MCF 10A (cell line): ENCODE measurements at regions of chr5 and their contacts with region 1.

Region 1: DNA sequence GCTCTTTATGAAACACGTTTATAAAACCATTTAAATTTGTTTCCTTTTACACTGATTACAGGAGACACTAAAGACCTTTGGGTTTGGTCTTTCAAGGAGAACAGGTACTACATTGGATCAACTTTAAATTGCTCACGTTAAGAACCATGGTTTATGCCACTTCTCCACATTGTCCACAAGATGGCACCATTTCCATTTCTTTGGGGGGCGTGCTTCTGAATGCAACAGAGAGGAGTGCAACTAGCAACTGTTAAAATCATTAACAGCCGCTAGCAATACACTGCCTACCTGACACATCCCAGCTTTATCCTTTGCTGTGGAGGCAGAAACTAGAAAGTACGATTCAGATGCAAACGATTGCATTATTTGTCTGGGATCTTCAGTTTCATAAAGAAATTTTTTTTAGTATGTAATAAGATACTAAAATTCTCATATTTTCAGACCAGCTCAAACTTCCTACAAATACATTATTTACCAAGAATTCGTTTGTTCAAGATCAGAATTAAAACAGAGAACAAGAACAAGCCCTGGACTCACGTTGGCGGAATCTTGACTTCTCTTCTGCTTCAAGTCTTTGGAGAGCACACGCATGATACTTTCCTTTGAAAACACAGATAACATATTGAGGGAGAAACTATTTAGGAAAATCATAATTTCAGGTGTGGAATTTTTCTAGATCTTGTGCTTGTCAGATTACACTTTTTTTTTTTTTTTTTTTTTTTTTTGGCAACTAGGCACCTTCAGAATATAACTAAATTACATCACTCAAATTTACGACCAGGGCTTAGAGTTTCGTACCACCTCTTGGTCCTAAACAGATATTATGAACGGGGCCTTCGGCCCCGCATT is 702 bp downstream of the CDC20B start:
- DNase-seq: peak; percentile 96
- H3K4me3 Mint-ChIP-seq: peak overlapping the region; percentile 83
- H3K27ac Mint-ChIP-seq: peak overlapping the region; percentile 25
- H3K4me1 Mint-ChIP-seq: peaks cover 16% of the 10 kb centered on the region
- H3K27me3 Mint-ChIP-seq: no peaks in the 10 kb centered on the region
- CTCF ChIP-seq: peak; percentile 69

Region 2: DNA sequence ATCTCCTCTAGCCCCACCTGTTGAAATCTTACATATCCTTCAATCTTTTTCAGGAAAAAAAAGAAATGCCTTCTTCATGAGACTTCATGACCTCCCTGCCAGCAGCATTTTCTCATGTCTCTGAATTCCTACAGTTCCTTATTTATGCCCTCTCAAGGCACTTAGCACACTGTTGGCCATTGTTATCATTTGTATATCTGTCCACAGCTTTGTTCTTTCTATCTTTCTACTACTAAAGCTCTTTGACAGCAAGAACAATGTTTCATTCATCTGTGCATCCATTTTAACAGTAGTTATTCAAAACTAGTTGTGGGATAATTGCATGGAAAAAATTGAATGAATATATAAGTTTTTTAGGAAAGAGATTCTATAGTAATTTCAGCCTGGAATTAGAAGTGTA is 90.7 kb before region 1 on chr5:
- CTCF ChIA-PET with region 1: no interaction called
- POLR2A ChIA-PET with region 1: no interaction called
- intact Hi-C with region 1: no loop called
- DNase-seq: no peak
- H3K4me3 Mint-ChIP-seq: no peak overlapping the region
- H3K27ac Mint-ChIP-seq: no peak overlapping the region
- H3K4me1 Mint-ChIP-seq: no peaks in the 10 kb centered on the region
- H3K27me3 Mint-ChIP-seq: peaks cover 34% of the 10 kb centered on the region
- CTCF ChIP-seq: no peak

Region 3: DNA sequence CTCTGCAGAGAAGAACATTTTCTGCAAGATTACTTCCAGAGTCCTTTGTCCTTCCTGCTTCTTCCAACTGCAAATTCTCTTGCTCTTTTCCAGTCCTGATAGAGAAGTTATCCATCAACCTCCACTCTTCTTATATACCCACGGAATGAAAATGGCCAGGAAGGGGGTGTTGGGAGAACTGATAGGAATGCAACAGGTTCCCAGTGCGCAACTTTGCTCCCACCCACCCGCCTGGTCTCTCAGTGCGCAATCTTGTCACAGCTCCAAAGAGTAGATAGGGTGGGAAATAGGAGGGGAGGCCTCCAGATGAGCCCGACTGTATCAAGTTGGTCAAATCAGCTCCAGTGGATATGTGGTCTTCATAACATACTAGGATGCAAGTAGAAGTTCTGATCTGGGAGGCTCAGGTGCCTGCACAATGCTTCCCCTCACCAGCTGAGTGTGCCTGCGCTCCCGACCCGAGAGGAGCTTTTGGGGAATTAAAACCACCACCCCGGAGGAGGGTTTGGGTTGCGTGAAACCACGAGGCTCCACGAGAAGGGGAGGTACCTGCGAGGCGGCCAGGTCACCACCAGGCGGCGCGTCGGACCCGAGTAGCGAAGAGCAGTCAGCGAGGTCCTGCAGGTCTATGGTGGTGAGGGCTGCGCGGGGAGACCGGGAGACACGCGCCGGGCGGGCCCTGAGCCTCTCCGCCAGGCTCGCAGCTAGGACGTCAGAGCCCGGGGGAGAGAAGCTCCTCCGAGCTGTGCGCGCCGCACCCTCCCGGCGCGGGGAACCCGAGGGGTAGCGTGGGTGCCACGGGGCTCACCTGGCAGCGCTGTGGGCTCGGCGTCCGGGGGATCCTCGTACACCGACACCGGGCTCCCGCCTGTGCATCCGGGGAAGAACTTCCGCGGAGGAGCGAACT is 54.0 kb after region 1 on chr5:
- CTCF ChIA-PET with region 1: interaction called, 14 read pairs
- POLR2A ChIA-PET with region 1: interaction called, 53 read pairs
- intact Hi-C with region 1: no loop called
- DNase-seq: peak; percentile 84
- H3K4me3 Mint-ChIP-seq: peak overlapping the region; percentile 74
- H3K27ac Mint-ChIP-seq: no peak overlapping the region
- H3K4me1 Mint-ChIP-seq: no peaks in the 10 kb centered on the region
- H3K27me3 Mint-ChIP-seq: no peaks in the 10 kb centered on the region
- CTCF ChIP-seq: peak; percentile 88

Region 4: GRCh38 chr5:55232985-55233928 is 61.0 kb after region 1 on chr5 and contains the start of gene CCNO:
- CTCF ChIA-PET with region 1: interaction called, 14 read pairs
- POLR2A ChIA-PET with region 1: interaction called, 53 read pairs
- intact Hi-C with region 1: loop called (anchors 2 kb)
- DNase-seq: peak; percentile 89
- H3K4me3 Mint-ChIP-seq: peak within 1 kb of the TSS; percentile 98
- H3K27ac Mint-ChIP-seq: peak within 1 kb of the TSS; percentile 90
- H3K4me1 Mint-ChIP-seq: no peaks in the 10 kb centered on the region
- H3K27me3 Mint-ChIP-seq: no peaks in the 10 kb centered on the region
- CTCF ChIP-seq: peak; percentile 20
- total RNA-seq, gene CCNO: 10.6 and 11.7 TPM in 2 replicates

Region 5: GRCh38 chr5:55307383-55308253 is 135.3 kb after region 1 on chr5 and contains the starts of genes DHX29 and MTREX:
- CTCF ChIA-PET with region 1: interaction called, 7 read pairs
- POLR2A ChIA-PET with region 1: interaction called, 13 read pairs
- intact Hi-C with region 1: loop called (anchors 10 kb)
- DNase-seq: peak; percentile 93
- H3K4me3 Mint-ChIP-seq: no peak within 1 kb of the TSS
- H3K27ac Mint-ChIP-seq: no peak within 1 kb of the TSS
- H3K4me1 Mint-ChIP-seq: peaks cover 23% of the 10 kb centered on the region
- H3K27me3 Mint-ChIP-seq: no peaks in the 10 kb centered on the region
- CTCF ChIP-seq: no peak
- total RNA-seq, gene DHX29: 18.1 and 21.8 TPM in 2 replicates
- total RNA-seq, gene MTREX: 113 and 118 TPM in 2 replicates

Region 6: GRCh38 chr5:55324815-55325418 is 152.6 kb after region 1 on chr5:
- CTCF ChIA-PET with region 1: interaction called, 3 read pairs
- POLR2A ChIA-PET with region 1: interaction called, 4 read pairs
- intact Hi-C with region 1: loop called (anchors 5 kb)
- DNase-seq: peak; percentile 53
- H3K4me3 Mint-ChIP-seq: no peak overlapping the region
- H3K27ac Mint-ChIP-seq: no peak overlapping the region
- H3K4me1 Mint-ChIP-seq: no peaks in the 10 kb centered on the region
- H3K27me3 Mint-ChIP-seq: no peaks in the 10 kb centered on the region
- CTCF ChIP-seq: peak; percentile 67

Region 7: DNA sequence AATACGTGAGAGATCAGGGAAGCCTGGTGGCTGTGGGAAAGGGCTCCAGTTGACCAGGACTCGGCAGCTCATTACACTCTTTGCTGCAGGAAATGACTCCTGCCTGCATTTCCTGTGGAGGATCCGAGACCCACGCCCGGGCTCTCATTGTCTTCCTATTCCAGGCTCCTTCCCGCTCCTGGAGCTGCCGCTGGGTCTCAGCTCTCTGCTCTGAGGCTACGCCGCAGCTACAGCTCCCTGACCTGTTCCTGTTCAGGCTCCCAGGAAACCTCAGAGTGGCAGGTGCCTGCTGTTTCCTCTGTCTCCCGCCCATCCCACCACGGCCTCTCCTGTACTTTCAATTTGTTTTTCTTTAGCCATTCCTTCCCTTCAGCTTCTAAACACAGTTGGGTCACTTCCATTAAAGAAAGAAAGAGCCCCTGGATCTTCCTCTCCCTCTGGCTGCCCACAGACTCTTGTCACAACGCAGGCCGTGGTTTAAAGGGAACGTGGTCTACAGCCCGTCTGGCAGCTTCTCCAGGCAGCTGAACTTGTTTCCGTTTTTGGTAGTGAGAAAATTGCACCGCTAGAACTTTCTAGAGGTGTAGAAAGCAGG is 751.0 kb after region 1 on chr5:
- CTCF ChIA-PET with region 1: no interaction called
- POLR2A ChIA-PET with region 1: no interaction called
- intact Hi-C with region 1: loop called (anchors 2 kb)
- DNase-seq: no peak
- H3K4me3 Mint-ChIP-seq: no peak overlapping the region
- H3K27ac Mint-ChIP-seq: no peak overlapping the region
- H3K4me1 Mint-ChIP-seq: no peaks in the 10 kb centered on the region
- H3K27me3 Mint-ChIP-seq: no peaks in the 10 kb centered on the region
- CTCF ChIP-seq: no peak